ENCODE measurements at regions of chr11 and their contacts with region 1.

Region 1: GRCh38 chr11:35617687-35618496 is at the start of gene FJX1:
- DNase-seq: no peak
- H3K4me3 ChIP-seq: peak within 1 kb of the TSS; percentile 53 to 56
- H3K27ac ChIP-seq: peak within 1 kb of the TSS; percentile 84
- H3K4me1 ChIP-seq: peaks cover 30% of the 10 kb centered on the region
- H3K27me3 ChIP-seq: no peaks in the 10 kb centered on the region
- CTCF ChIP-seq: no peak
- POLR2A ChIP-seq: no peak
- total RNA-seq, gene FJX1: 7.4 TPM

Region 2: GRCh38 chr11:35478471-35479091 is 139.3 kb before region 1 on chr11:
- intact Hi-C with region 1: no loop called
- DNase-seq: no peak
- H3K4me3 ChIP-seq: no peak overlapping the region
- H3K27ac ChIP-seq: no peak overlapping the region
- H3K4me1 ChIP-seq: peaks cover 16% of the 10 kb centered on the region
- H3K27me3 ChIP-seq: no peaks in the 10 kb centered on the region
- CTCF ChIP-seq: no peak
- POLR2A ChIP-seq: no peak

Region 3: DNA sequence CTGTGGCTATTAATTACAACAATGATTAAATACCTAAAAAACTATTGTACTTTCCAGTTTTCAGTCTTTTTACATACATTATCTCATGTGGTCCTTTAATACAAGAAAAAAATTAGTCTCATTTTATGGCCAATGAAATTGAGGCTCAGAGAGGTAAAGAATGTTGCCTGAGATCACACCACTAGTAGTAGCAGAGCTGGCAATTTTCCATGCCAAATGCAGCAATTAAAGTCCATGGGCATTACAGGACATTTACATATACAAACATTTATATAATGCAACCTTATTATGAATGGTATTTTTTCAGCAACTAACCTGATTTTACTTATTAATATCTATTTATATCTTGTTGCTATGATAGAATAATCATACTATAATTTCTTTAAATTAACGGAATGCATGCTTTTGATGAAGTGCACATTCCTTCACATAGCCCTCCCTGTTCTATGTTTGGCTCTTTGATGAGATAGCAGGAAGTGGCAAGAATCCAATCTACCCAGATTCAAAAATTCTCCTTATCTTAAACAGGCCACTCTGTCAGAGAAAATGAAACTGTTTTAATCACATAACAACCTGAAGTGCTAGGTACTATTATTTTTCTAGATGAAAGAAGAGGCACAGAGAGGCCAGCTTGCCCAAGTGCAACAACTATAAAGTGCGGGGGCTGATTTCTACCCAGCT is 205.1 kb after region 1 on chr11:
- intact Hi-C with region 1: loop called (anchors 10 kb)
- DNase-seq: no peak
- H3K4me3 ChIP-seq: no peak overlapping the region
- H3K27ac ChIP-seq: no peak overlapping the region
- H3K4me1 ChIP-seq: peaks cover 14% of the 10 kb centered on the region
- H3K27me3 ChIP-seq: no peaks in the 10 kb centered on the region
- CTCF ChIP-seq: no peak
- POLR2A ChIP-seq: no peak

Region 4: DNA sequence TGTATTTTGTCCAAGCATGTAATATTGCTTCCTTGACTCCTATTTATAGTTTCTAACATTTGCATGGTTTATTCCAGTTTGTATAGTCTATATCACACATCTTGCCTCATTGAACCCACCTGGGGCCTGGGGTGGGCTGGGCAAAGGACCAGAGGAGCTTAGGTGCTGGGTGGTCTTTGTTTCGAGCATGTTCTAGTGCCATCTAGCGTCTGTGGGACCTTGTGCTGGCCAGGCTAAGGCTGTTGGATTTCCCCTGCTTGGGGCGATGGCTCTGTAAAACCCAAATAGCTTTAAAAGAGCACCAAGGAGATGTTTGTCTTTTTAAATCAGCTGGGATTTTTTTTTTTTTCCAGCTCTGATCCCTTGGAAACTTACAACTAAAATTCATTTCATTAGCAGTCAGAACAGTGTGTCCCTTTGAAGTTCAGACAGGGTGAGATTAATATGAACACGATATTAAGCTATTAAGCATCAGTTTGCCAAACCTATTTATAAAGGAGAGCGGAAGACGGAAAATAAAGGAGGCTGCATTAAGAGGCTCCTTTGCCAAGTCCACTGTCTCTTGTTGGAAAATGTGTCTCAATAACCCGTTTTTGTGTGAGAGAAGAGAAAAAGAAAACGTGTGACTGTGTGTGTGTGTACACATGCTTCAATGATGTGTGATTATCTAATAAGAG is 514.0 kb after region 1 on chr11:
- intact Hi-C with region 1: loop called (anchors 10 kb)
- DNase-seq: no peak
- H3K4me3 ChIP-seq: no peak overlapping the region
- H3K27ac ChIP-seq: peak overlapping the region; percentile 22
- H3K4me1 ChIP-seq: peaks cover 7% of the 10 kb centered on the region
- H3K27me3 ChIP-seq: no peaks in the 10 kb centered on the region
- CTCF ChIP-seq: peak in 2 of 3 experiments; percentile 56 to 57
- POLR2A ChIP-seq: no peak

Region 5: GRCh38 chr11:36265793-36266628 is 648.1 kb after region 1 on chr11:
- intact Hi-C with region 1: loop called (anchors 5 kb)
- DNase-seq: no peak
- H3K4me3 ChIP-seq: no peak overlapping the region
- H3K27ac ChIP-seq: no peak overlapping the region
- H3K4me1 ChIP-seq: no peaks in the 10 kb centered on the region
- H3K27me3 ChIP-seq: no peaks in the 10 kb centered on the region
- CTCF ChIP-seq: peak; percentile 25 to 82 (median 81)
- POLR2A ChIP-seq: no peak

Measured in vagina (tissue), 2 donors.